Dendritic cell treated with granulocyte-macrophage colony-stimulating factor and Interleukin-4, amounts not matched to agents 40 ng/mL and 50 ng/mL, for 4 days (primary cell): ENCODE measurements at regions of chr5 and their contacts with region 1.

Region 1: DNA sequence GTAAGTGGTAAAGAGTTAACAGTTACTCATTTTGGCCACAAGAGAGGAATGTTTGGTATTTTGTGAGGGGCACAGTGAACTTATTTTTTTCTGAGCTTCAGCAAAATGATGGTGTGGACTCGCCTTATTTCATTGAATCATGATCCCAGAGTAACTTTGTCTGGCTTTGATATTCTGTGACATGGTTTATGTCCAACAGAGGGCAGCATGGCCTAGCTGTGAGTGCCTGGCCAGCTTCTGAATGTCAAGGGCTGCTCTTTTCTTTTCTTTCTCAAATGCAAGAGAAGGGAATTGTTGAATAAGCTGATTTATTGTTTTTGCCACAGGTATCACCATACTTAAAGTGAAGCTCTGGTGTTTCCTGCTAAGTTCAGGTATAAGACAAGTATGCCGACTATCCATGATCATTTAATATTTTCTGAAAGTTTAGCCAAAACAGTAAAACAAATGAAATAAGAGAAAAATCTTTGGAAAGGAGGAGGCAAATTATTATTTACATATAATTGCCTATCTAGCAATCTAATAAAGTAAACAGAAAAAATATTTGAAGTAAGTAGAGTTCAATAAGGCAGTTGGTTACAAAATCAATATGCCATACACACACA is 31.7 kb downstream of the MRPL22 start:
- H3K4me3 Mint-ChIP-seq: no peak overlapping the region
- H3K27ac Mint-ChIP-seq: no peak overlapping the region
- H3K4me1 Mint-ChIP-seq: peaks cover 23% of the 10 kb centered on the region
- H3K27me3 Mint-ChIP-seq: no peaks in the 10 kb centered on the region

Region 2: GRCh38 chr5:155004138-155004744 is 31.7 kb after region 1 on chr5:
- intact Hi-C with region 1: loop called (anchors 2 kb)
- H3K4me3 Mint-ChIP-seq: no peak overlapping the region
- H3K27ac Mint-ChIP-seq: no peak overlapping the region
- H3K4me1 Mint-ChIP-seq: no peaks in the 10 kb centered on the region
- H3K27me3 Mint-ChIP-seq: peaks cover 7% of the 10 kb centered on the region